WTC11 (cell line): ENCODE measurements at regions of chr6 and their contacts with region 1.

Region 1: DNA sequence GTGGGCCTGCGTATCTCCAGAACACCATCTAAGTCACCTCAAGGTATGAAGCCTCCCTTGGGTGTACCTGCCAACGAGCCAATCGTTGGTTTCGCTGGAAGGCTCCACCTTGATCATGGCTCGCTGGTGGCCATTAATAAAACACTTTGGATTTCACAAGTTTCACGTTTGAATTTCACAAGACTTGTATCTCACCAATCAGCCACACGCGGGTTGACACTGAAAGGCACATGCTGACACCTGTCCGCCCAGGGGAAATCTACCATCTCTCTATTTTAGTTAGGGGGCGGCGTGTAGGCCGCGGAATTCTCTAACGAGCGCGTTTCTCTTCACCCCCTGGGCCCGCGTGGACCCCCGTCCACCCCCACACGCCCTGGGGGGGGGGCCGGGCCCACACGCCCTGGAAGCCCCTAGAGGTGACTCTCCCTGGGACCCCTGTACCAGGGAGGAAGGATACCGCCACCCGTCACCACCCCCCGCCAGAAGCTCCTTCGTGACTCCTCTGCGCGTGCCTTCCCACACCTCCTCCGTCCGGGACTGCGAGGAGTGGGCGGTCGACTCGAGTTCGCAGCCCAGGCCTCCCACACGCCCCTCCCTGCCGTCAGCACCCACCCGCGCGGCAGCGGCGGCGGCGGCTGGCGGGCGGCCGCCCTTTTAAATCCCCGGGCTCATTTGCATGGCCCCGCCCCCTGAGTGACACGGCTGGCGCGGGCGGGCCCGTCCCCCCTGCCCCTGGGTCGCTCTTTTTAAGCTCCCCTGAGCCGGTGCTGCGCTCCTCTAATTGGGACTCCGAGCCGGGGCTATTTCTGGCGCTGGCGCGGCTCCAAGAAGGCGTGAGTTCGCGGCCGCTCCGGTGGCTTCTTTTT is at the start of gene HMGA1:
- DNase-seq: peak; percentile 88
- ATAC-seq: peak; percentile 34
- H3K4me3 Mint-ChIP-seq: peak within 1 kb of the TSS; percentile 93
- H3K27ac Mint-ChIP-seq: peak within 1 kb of the TSS; percentile 100
- H3K4me1 Mint-ChIP-seq: peaks cover 52% of the 10 kb centered on the region
- H3K27me3 Mint-ChIP-seq: no peaks in the 10 kb centered on the region
- CTCF ChIP-seq: no peak
- total RNA-seq, gene HMGA1: 2,446 to 2,677 TPM (median 2,610 TPM) in 3 replicates

Region 2: DNA sequence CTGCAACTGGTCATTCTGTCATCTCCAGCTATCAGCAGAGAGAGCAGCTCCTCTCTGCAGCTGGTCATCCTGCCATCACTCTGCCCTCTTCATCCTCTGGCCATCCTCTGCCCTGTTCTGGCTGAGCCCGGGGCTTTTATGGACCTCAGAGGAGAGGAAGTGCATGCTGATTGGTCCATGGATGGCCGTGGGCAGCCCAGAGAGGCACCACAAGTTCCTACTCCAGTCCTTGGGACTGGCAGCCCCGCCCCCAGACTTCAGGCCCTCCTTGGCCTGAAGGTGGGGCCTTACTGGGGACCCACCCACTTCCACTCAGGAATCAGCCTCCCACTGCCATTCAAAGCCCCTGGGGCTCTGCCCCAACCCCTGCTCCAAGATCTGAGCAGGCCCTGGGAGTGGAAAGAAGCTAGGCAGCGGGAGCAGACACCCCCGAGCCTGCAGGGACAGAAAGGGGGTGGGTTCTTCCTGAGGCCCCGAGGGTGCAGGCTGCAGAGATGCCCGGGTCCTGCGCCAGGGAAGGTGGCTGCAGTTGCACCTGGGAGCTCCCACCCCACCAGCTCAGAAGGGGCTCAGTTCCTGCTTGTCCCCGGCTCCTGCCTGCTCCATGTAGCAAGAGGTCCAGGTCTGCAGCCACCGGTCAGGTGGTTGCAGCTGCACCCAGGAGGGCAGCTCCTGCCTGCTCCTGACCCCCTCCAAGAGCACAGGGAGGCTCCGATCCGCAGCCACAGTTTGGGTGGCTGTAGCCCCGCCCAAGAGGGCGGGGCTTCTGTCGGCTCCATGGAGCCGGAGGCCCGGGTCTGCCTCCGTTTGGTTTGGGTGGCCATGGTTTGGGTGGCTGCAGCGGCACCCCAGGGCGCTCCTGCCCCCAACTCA is 33.8 kb before region 1 on chr6:
- CTCF ChIA-PET with region 1: interaction called, 14 read pairs
- POLR2A ChIA-PET with region 1: interaction called, 16 read pairs
- DNase-seq: peak; percentile 69
- ATAC-seq: peak; percentile 77
- H3K4me3 Mint-ChIP-seq: peak overlapping the region; percentile 3; the same call in 1 of the 2 replicates
- H3K27ac Mint-ChIP-seq: 0 out of 2 replicates have a peak overlapping the region, but pooled peaks have one; percentile 52
- H3K4me1 Mint-ChIP-seq: peaks cover 51% of the 10 kb centered on the region
- H3K27me3 Mint-ChIP-seq: no peaks in the 10 kb centered on the region; the same call in 1 of the 2 replicates
- CTCF ChIP-seq: no peak